ENCODE measurements at regions of chr6 and their contacts with region 1.

Region 1: GRCh38 chr6:31452859-31453258 is 45.1 kb upstream of the MICB start:
- DNase-seq: no peak
- ATAC-seq: no peak
- H3K4me3 ChIP-seq: no peak overlapping the region
- H3K27ac ChIP-seq: no peak overlapping the region
- H3K4me1 ChIP-seq: no peaks in the 10 kb centered on the region
- H3K27me3 ChIP-seq: no peaks in the 10 kb centered on the region; a peak in 3 of 4 replicates
- CTCF ChIP-seq: no peak
- EP300 ChIP-seq: no peak
- POLR2A ChIP-seq: no peak
- RAD21 ChIP-seq: no peak

Region 2: GRCh38 chr6:31403283-31403989 is 49.4 kb before region 1 on chr6 and contains the start of gene MICA:
- CTCF ChIA-PET with region 1: interaction called, 12 read pairs
- POLR2A ChIA-PET with region 1: no interaction called
- RAD21 ChIA-PET with region 1: no interaction called
- SMC1A ChIA-PET with region 1: no interaction called
- in situ Hi-C with region 1: no loop called
- intact Hi-C with region 1: no loop called
- DNase-seq: no peak
- ATAC-seq: peak; percentile 80
- H3K4me3 ChIP-seq: peak within 1 kb of the TSS; percentile 71
- H3K27ac ChIP-seq: peak within 1 kb of the TSS; percentile 58
- H3K4me1 ChIP-seq: peaks cover 16% of the 10 kb centered on the region
- H3K27me3 ChIP-seq: no peaks in the 10 kb centered on the region
- CTCF ChIP-seq: no peak
- EP300 ChIP-seq: no peak
- POLR2A ChIP-seq: no peak; the same call in 1 of the 2 replicates
- RAD21 ChIP-seq: no peak
- polyA plus RNA-seq, gene MICA: 5.0 to 5.6 TPM

Measured in GM12878 (cell line).